Posterior cingulate gyrus (tissue), 11 donors: ENCODE measurements at regions of chr11 and their contacts with region 1.

Region 1: GRCh38 chr11:6603287-6604080 is at the starts of genes ILK and RRP8:
- DNase-seq: peak; percentile 88 to 98 (median 91)

Region 2: DNA sequence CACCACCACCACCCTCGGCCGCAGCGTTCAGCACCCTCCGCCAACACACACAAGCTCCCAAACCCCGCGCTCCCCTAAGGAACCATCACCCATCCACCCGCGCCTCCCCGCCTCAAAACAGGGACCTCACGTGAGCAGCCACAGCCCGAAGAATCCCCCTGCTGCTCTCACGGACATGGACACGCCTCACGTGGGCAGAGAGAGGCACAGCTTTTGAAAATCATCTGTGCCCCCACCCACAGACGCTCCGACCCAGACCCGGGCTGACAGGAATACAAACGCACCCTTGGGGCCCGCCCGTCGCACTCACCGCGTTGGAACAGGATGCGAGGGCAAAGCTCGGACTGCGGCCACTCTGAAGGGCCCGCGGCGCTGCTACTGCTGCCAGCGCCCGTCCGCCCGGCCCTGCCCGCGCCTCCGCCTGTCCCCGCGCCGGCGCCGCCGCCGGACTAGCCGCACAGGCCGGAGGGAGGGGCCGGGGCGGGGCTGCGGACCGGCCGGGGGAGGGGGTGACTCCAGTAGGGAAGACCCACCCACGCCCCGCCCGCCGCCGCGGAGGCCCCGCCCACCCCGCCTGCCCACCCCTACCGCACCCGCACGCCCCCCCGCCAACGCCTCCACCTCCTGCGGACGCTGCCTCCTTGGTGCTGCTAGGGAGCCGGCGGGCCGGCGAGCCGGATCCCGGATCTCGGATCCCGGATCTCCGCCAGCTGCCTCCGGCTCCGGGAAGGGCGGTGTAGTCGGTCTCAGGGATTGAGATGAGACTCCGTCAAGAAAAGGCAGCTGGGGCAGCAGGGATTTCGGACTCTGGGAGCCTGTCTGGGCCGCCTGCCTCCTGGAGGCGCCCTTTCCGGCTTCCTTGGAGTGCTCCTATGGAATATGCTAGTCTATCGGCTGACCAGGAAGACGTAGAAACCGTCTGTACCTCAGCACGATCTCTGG is 129.7 kb before region 1 on chr11 and contains the start of gene TRIM3:
- intact Hi-C with region 1: loop called (anchors 10 kb)
- DNase-seq: peak; percentile 83 to 98 (median 92)

Region 3: DNA sequence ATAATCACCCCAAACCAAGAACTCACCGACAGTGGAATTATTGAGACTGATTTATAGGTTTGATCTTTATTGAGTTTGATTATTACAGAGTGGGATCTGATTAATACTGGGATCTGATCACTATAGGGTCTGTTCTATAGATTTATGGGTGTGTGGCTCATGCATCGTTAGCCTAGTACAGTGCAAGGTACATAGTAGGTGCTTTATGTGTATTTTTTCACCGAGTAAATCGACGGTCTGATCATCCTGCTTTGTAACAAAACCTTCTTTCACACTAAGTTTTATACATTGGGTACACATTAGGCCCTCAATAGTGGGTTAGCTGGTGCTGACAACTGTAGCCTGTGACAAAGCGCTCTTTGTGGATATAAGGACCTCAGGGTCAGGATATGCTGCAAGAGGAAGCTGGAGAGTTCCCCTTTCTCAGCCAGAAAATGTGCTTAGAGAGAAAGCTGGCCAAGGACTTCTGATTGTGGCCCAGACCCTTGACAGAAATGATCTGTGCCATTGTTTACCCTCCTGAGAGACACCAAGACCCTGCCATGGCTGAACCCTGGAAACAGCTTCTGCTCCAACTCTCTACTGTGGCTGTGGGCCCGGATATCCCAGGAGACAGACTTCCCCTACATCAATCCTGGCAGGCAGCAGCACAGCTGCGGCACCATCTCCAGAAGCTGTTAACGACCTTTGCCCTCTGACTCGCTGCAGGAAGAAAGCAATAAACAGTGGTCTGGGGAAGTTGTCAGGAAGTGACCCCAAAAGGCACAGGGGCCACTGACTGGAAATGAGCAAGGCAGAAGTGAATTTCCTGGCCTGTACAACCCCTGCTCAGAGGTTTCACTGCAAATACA is 31.8 kb after region 1 on chr11:
- intact Hi-C with region 1: no loop called
- DNase-seq: peak in 5 of 10 donors; percentile 45 to 92 (median 59)